ENCODE measurements at regions of chr1 and their contacts with region 1.

Region 1: DNA sequence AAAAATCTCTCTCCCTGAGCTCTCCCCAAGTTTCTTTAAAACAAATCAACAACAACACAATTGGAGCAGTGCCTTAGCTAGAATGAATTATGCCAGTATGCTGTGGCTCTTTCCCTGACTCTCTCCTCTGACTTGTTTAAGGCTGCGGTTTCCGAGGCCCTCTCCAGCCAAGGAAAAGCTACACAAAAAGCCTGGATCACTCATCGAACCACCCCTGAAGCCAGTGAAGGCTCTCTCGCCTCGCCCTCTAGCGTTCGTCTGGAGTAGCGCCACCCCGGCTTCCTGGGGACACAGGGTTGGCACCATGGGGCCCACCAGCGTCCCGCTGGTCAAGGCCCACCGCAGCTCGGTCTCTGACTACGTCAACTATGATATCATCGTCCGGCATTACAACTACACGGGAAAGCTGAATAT is 1.9 kb downstream of the S1PR1 start:
- DNase-seq: peak; percentile 63 to 92 (median 84)
- ATAC-seq: peak; percentile 27 to 39
- H3K4me3 Mint-ChIP-seq: peak overlapping the region; percentile 92 to 100 (median 100)
- H3K27ac Mint-ChIP-seq: peak overlapping the region; percentile 95 to 100 (median 99)
- H3K4me1 Mint-ChIP-seq: peaks cover 37 to 72% (median 64%) of the 10 kb centered on the region in 4 donors
- H3K27me3 Mint-ChIP-seq: no peaks in the 10 kb centered on the region

Region 2: GRCh38 chr1:100928128-100928527 is 310.6 kb before region 1 on chr1:
- POLR2A ChIA-PET with region 1: interaction called, 164 read pairs
- DNase-seq: no peak
- ATAC-seq: peak in 1 of 2 donors; percentile 12
- H3K4me3 Mint-ChIP-seq: no peak overlapping the region
- H3K27ac Mint-ChIP-seq: no peak overlapping the region
- H3K4me1 Mint-ChIP-seq: peaks cover 20 to 58% (median 34%) of the 10 kb centered on the region in 4 donors
- H3K27me3 Mint-ChIP-seq: no peaks in the 10 kb centered on the region

Region 3: GRCh38 chr1:101025657-101026504 is 212.8 kb before region 1 on chr1 and contains the start of gene DPH5:
- POLR2A ChIA-PET with region 1: interaction called, 15 read pairs
- DNase-seq: peak; percentile 75 to 91 (median 84)
- ATAC-seq: peak; percentile 95
- H3K4me3 Mint-ChIP-seq: peak within 1 kb of the TSS; percentile 87 to 99 (median 92)
- H3K27ac Mint-ChIP-seq: peak within 1 kb of the TSS; percentile 93 to 100 (median 98)
- H3K4me1 Mint-ChIP-seq: peaks cover 26 to 84% (median 70%) of the 10 kb centered on the region in 4 donors
- H3K27me3 Mint-ChIP-seq: no peaks in the 10 kb centered on the region
- polyA plus RNA-seq, gene DPH5: 41.8 to 62.4 (median 59.9) TPM

Region 4: DNA sequence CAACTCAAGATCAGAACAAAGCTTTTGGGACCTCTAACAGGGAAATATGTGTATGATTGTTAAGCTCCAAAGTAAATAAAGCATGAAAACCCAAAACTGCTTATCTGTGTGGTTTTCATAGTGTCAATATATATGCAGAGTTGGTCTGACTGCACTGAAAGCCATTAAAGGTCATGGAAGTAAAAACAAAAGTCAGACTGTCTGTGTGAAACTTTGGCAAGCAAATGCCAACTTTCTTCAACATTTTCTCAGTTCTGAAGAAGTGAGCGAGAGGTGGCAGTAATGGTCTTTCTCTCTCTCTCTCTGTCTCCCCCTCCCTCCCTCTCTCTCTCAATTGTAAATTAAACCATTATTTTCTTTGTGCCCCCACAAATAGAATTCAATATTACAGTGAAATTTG is 101.9 kb before region 1 on chr1:
- POLR2A ChIA-PET with region 1: interaction called, 81 read pairs
- DNase-seq: peak in 4 of 10 donors; percentile 28 to 56 (median 50)
- ATAC-seq: peak; percentile 78 to 79
- H3K4me3 Mint-ChIP-seq: peak overlapping the region; percentile 21 to 64 (median 48)
- H3K27ac Mint-ChIP-seq: peak overlapping the region; percentile 71 to 92 (median 88)
- H3K4me1 Mint-ChIP-seq: peaks cover 32 to 63% (median 57%) of the 10 kb centered on the region in 4 donors
- H3K27me3 Mint-ChIP-seq: no peaks in the 10 kb centered on the region

Region 5: DNA sequence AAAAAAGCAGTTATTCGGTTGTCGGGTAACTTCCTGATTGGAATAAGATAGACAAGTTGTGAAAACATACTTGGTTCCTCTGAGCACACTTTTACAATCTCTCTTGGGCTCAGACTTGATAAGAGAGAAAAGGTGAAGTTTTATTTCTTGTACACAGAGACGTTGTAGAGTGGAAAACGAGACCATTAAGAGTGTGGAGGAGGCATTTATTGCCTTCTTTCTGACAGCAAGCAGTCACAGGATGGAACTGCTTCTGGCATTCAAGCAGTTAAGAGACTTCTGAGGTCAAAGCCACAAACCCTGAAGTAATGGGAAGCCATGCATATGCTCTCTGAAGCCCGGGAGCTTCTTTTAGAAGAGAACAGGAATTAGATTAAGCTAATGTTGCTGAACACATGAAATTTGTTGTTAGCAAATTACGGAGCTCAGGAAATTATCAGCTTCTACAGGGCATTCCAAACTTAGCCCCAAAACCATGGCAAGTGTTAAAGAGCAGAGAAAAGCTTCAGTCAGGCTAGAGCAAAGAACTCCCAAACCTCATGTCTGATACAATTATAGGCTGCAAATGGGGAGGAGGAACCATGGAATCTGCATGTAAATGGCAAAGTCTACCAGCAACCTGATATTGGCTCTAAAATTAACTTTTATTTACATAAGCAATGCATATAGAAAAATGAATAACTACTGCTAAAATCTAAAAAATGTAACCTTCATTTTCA is 24.1 kb after region 1 on chr1:
- POLR2A ChIA-PET with region 1: interaction called, 33 read pairs
- DNase-seq: peak in 5 of 10 donors; percentile 21 to 67 (median 58)
- ATAC-seq: peak; percentile 65 to 77
- H3K4me3 Mint-ChIP-seq: peak overlapping the region; percentile 51 to 81 (median 80)
- H3K27ac Mint-ChIP-seq: peak overlapping the region; percentile 75 to 94 (median 90)
- H3K4me1 Mint-ChIP-seq: peaks cover 51 to 94% (median 90%) of the 10 kb centered on the region in 4 donors
- H3K27me3 Mint-ChIP-seq: no peaks in the 10 kb centered on the region

Region 6: DNA sequence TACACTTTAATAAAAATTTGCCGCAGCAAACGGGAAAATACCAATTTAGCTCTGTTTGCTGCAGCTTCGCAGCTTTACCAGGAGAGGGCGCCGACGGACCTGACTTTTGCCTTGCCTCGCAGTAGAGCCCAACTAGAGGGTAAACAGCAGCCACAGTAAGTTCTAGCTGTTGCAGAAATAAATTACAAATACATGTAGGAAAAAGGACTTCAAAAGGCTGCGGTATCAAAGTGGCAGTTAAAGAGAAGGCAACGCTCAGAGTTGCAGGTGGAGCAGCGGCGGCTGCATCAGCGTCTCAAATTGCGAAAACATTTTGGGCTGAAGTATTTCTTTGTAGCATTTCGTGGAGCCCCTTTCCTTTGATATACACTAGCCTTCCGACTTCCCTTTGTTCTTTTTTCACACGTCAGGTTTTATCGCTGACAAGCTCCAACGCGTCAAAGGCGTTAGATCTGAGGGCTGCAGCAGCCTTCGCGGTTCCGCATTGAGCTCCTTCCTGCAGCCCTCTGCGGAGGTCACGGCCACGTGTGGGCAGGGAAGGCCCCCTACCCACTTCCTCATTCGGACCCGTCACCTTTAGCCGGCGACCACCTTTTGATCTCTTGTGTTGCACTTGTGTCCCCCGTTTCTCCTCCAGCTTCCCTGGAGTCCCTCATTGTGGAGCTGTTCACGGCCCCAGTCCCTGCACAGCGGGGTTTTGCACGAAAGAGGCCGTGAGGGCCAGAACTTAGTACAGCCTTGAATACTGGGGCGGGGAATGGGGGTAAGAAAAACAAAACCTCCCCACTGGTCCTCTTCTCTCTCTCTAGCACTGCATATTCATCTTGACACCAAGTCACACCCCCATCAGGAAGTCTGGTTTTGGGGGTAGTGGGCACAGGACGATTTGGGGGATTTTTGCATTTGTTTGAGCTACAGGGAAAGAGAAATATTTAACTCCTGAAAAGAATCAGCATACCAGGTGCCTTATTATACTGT is 70.9 kb after region 1 on chr1:
- POLR2A ChIA-PET with region 1: interaction called, 38 read pairs
- DNase-seq: peak; percentile 57 to 94 (median 86)
- ATAC-seq: peak; percentile 78
- H3K4me3 Mint-ChIP-seq: peak overlapping the region; percentile 78 to 90 (median 85)
- H3K27ac Mint-ChIP-seq: peak overlapping the region; percentile 95 to 100 (median 99)
- H3K4me1 Mint-ChIP-seq: peaks cover 33 to 82% (median 68%) of the 10 kb centered on the region in 4 donors
- H3K27me3 Mint-ChIP-seq: no peaks in the 10 kb centered on the region

Measured in naive thymus-derived CD8-positive, alpha-beta T cell (primary cell).